ENCODE measurements at regions of chr13 and their contacts with region 1.

Region 1: DNA sequence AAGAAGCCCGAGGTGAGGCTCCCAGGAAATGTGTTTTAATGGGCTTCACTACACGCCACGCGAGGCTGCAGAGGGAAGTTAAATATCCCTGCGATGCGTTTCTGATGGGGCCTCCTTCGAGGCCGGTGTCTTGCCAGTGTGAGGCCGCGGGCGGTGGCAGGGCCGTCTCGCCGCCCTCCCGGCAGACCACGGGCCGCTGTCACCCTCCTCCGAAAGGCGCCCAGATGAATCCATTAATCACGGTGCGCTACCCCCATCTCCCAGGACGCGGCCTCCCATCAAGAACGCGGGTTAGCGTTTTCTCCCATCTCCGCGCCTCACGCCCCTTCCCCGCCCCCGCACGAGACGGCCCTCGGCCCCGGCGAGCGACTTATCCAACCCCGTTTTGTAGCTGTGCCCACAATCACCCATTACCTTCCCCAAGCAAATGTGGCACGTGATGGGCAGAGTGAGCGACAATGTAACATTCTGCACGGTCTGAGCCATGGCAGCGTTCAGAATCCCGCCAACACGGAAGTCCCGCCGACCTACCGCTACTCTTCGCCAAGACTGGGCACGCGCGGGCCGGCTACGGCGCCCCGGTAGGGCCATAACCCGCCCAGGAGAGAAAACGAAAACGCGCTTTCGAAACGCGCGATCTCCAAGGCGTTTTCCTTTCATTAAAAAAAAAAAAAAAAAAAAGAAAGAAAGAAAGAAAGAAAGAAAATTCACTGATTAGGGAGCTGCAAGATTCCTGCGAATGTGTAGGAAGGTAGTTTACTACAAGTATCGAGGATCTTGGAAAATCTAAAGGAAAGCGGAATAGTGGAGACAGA is at the start of gene OBI1:
- H3K4me3 Mint-ChIP-seq: peak within 1 kb of the TSS; percentile 100
- H3K27ac Mint-ChIP-seq: peak within 1 kb of the TSS; percentile 94
- H3K4me1 Mint-ChIP-seq: peaks cover 11% of the 10 kb centered on the region
- H3K27me3 Mint-ChIP-seq: peaks cover 6% of the 10 kb centered on the region

Region 2: DNA sequence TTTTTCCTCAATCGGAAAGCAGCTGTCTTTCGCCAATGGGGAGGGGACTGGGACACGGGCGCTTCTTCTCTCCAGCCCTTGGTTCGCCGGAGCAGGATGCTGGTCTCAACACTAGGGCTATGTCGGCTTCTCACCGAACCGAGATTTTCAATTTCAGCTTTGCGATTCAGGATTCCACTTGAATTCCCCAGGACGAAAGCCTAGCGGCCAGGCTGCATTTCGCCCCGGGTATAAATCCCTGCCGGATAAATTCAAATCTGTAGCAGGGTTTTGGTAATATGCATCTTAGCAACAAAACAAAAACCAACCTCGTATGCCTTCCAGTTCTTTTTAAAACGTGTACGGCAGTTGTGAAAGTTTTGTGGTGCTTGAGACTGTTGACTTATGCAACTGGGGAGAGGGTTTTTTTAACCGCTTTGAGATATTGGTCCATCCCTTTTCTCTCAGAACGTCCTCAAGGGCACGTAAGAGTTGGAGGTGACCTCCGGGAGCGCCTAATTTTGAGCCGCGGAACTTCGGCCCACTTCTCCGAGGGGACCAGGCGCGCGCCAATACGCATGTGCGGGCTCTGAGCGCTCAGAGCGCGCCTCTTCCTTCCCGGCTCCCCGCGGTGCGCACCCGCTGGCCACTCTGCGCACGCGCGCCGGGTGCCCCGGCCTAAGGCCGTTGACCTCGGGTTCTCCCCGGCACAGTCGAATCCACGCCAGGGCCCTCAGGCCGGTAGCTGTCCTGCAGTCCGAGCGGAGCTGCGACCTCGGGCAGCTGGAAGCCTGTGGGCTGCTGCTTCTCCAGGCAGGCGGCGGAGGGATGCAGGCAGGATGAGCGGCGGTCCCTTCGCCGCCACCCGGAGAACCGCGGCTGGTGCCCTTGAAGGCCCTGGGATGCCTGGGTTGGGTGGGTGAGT is 63.1 kb before region 1 on chr13:
- intact Hi-C with region 1: loop called (anchors 5 kb)
- H3K4me3 Mint-ChIP-seq: peak overlapping the region; percentile 69
- H3K27ac Mint-ChIP-seq: no peak overlapping the region
- H3K4me1 Mint-ChIP-seq: peaks cover 29% of the 10 kb centered on the region
- H3K27me3 Mint-ChIP-seq: peaks cover 80% of the 10 kb centered on the region

Region 3: GRCh38 chr13:78638216-78638615 is 20.6 kb before region 1 on chr13:
- intact Hi-C with region 1: no loop called
- H3K4me3 Mint-ChIP-seq: no peak overlapping the region
- H3K27ac Mint-ChIP-seq: no peak overlapping the region
- H3K4me1 Mint-ChIP-seq: no peaks in the 10 kb centered on the region
- H3K27me3 Mint-ChIP-seq: no peaks in the 10 kb centered on the region

Region 4: DNA sequence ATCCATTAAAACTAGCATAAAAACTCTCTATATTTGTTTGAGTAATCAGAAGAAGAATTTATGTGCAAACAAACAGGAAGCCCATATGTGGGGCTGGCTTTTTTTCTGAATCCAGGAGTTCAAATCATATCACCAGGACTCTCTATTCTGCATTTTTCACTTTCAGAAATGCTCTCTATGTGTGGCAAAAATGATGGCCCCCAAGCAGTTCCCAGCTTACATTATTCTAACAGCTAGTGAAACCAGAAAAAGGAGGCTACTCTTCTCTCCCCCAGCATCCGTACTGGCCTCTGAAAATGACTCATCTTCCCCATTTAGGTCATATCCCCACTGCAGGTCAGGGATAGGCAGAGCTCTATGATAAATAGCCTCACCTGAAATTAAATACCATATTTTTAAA is 726.9 kb after region 1 on chr13:
- intact Hi-C with region 1: loop called (anchors 10 kb)
- H3K4me3 Mint-ChIP-seq: no peak overlapping the region
- H3K27ac Mint-ChIP-seq: no peak overlapping the region
- H3K4me1 Mint-ChIP-seq: peaks cover 46% of the 10 kb centered on the region
- H3K27me3 Mint-ChIP-seq: no peaks in the 10 kb centered on the region

Region 5: GRCh38 chr13:79692846-79693245 is 1034.0 kb after region 1 on chr13:
- intact Hi-C with region 1: no loop called
- H3K4me3 Mint-ChIP-seq: no peak overlapping the region
- H3K27ac Mint-ChIP-seq: no peak overlapping the region
- H3K4me1 Mint-ChIP-seq: no peaks in the 10 kb centered on the region
- H3K27me3 Mint-ChIP-seq: no peaks in the 10 kb centered on the region

Measured in dendritic cell treated with granulocyte-macrophage colony-stimulating factor and Interleukin-4, amounts not matched to agents 40 ng/mL and 50 ng/mL, for 4 days (primary cell).